T-cell (primary cell): ENCODE measurements at regions of chr17 and their contacts with region 1.

Region 1: DNA sequence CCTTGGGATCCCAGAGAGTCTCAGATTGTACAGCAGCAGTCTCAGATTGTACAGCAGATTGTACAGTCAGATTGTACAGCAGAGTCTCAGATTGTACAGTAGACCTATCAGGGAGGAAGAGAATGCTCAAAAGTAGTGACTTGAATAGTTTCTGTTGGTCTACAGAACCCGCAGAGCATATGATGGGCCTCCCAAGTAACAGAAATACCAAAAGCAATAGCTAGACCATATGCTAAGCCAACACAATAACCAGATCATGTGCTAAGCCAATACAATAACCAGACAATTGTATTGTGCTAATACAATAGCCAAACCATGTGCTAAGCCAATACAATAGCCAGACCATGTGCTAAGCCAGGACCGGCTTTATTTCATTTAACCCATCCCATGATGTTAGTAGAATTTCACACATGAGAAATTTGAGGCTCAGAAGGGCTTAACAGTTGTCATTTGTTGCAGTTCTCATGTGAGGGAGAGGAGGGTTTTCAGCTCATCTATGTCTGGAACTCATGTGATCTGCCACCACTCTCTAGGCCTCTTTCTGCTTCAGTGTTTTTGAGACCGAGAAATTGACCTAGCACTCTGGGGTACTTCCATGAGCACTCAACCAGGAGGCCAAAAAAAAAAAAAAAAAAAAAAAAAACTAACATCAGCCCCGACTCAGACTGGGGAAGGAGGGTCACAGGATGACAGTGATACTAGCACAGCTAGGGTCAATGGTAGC is 144.0 kb downstream of the SOX9 start:
- DNase-seq: no peak
- ATAC-seq: no peak
- H3K4me3 ChIP-seq: no peak overlapping the region
- H3K4me3 Mint-ChIP-seq: no peak overlapping the region
- H3K27ac ChIP-seq: no peak overlapping the region
- H3K27ac Mint-ChIP-seq: no peak overlapping the region
- H3K4me1 ChIP-seq: no peaks in the 10 kb centered on the region
- H3K4me1 Mint-ChIP-seq: no peaks in the 10 kb centered on the region
- H3K27me3 ChIP-seq: no peaks in the 10 kb centered on the region
- H3K27me3 Mint-ChIP-seq: peaks cover 7% of the 10 kb centered on the region in 2 donors

Region 2: DNA sequence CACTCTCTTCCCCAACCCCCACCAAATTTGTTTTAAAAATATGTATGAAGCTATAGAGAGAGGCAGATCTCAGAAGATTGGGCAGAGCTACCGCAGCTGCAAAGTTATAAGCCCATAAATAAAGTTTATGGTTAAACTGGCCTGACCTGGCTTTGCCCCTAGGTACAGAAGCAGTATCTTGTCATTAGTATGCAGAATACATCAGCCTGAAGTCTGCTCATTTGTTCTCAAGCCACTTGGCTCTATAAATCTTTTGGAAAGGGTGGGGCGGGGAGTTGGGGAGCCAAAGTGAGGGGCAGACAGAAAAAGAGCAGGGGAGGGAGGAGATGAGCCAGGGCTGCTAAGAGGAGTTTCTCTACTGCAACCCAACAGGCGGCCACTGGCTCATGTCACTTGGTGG is 30.9 kb before region 1 on chr17:
- CTCF ChIA-PET with region 1: no interaction called
- POLR2A ChIA-PET with region 1: interaction called in 1 of 2 experiments, 13 read pairs
- DNase-seq: no peak
- ATAC-seq: no peak
- H3K4me3 ChIP-seq: no peak overlapping the region
- H3K4me3 Mint-ChIP-seq: no peak overlapping the region
- H3K27ac ChIP-seq: no peak overlapping the region
- H3K27ac Mint-ChIP-seq: no peak overlapping the region
- H3K4me1 ChIP-seq: no peaks in the 10 kb centered on the region
- H3K4me1 Mint-ChIP-seq: no peaks in the 10 kb centered on the region
- H3K27me3 ChIP-seq: peaks cover 0 to 11% of the 10 kb centered on the region in 2 experiments
- H3K27me3 Mint-ChIP-seq: peaks cover 9 to 15% of the 10 kb centered on the region in 2 donors

Region 3: DNA sequence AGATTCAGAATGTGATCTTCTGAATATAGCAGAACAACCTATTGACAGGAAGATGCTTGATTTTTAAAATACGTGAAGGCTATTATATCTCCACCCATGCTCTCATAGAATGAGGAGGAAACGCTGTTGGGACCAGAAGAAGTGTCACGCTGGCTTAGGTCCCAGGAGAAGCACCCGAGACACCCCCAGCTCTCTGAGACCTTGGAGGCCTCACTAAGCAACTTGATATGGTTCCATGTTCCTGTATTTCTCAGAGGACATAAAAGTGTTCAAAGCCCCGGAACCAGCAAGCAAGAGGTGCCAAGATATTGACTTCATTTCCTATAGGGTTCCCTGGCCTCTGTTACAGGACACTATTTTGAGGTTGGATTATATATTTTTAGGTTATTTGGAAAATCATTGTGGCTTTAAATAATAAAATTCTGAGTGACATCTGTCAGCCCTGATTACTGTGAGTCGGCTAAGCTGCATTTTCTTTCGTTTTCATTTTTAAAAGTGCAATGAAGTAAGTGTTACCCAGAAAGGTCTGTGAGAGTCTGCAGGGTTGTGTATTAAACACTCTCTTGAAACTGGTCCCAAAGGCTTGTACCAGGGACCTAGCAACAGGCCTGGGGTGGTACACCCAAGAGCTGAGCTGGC is 255.9 kb after region 1 on chr17:
- CTCF ChIA-PET with region 1: no interaction called
- POLR2A ChIA-PET with region 1: no interaction called
- DNase-seq: no peak
- ATAC-seq: no peak
- H3K4me3 ChIP-seq: no peak overlapping the region
- H3K4me3 Mint-ChIP-seq: no peak overlapping the region
- H3K27ac ChIP-seq: no peak overlapping the region
- H3K27ac Mint-ChIP-seq: no peak overlapping the region
- H3K4me1 ChIP-seq: no peaks in the 10 kb centered on the region
- H3K4me1 Mint-ChIP-seq: peaks cover 0 to 3% (median 0%) of the 10 kb centered on the region in 3 donors
- H3K27me3 ChIP-seq: peaks cover 0 to 20% of the 10 kb centered on the region in 2 experiments
- H3K27me3 Mint-ChIP-seq: peaks cover 2 to 29% of the 10 kb centered on the region in 2 donors